A549 (cell line): ENCODE measurements at regions of chr5 and their contacts with region 1.

Region 1: GRCh38 chr5:126339215-126339805 is 83.9 kb upstream of the GRAMD2B start:
- DNase-seq: peak; percentile 38 to 65
- ATAC-seq: peak; percentile 57 to 82; a peak in 3 of 6 replicates
- H3K4me3 ChIP-seq: no peak overlapping the region
- H3K27ac ChIP-seq: no peak overlapping the region
- H3K4me1 ChIP-seq: no peaks in the 10 kb centered on the region
- CTCF ChIP-seq: peak; percentile 90
- EP300 ChIP-seq: no peak
- POLR2A ChIP-seq: no peak
- RAD21 ChIP-seq: peak; percentile 82 to 87

Region 2: GRCh38 chr5:125394661-125395280 is 944.5 kb before region 1 on chr5:
- CTCF ChIA-PET with region 1: no interaction called
- POLR2A ChIA-PET with region 1: no interaction called
- DNase-seq: no peak
- ATAC-seq: no peak
- H3K4me3 ChIP-seq: no peak overlapping the region
- H3K27ac ChIP-seq: no peak overlapping the region
- H3K4me1 ChIP-seq: no peaks in the 10 kb centered on the region
- CTCF ChIP-seq: no peak
- EP300 ChIP-seq: no peak
- POLR2A ChIP-seq: no peak
- RAD21 ChIP-seq: no peak

Region 3: GRCh38 chr5:125970631-125971307 is 368.5 kb before region 1 on chr5:
- CTCF ChIA-PET with region 1: no interaction called
- POLR2A ChIA-PET with region 1: no interaction called
- DNase-seq: no peak
- ATAC-seq: no peak
- H3K4me3 ChIP-seq: no peak overlapping the region
- H3K27ac ChIP-seq: no peak overlapping the region
- H3K4me1 ChIP-seq: no peaks in the 10 kb centered on the region
- CTCF ChIP-seq: no peak
- EP300 ChIP-seq: no peak
- POLR2A ChIP-seq: no peak
- RAD21 ChIP-seq: no peak

Region 4: GRCh38 chr5:126519634-126520592 is 180.6 kb after region 1 on chr5:
- CTCF ChIA-PET with region 1: interaction called, 12 read pairs
- POLR2A ChIA-PET with region 1: no interaction called
- DNase-seq: no peak
- ATAC-seq: no peak
- H3K4me3 ChIP-seq: no peak overlapping the region
- H3K27ac ChIP-seq: no peak overlapping the region
- H3K4me1 ChIP-seq: no peaks in the 10 kb centered on the region
- CTCF ChIP-seq: no peak
- EP300 ChIP-seq: no peak
- POLR2A ChIP-seq: no peak
- RAD21 ChIP-seq: no peak

Region 5: DNA sequence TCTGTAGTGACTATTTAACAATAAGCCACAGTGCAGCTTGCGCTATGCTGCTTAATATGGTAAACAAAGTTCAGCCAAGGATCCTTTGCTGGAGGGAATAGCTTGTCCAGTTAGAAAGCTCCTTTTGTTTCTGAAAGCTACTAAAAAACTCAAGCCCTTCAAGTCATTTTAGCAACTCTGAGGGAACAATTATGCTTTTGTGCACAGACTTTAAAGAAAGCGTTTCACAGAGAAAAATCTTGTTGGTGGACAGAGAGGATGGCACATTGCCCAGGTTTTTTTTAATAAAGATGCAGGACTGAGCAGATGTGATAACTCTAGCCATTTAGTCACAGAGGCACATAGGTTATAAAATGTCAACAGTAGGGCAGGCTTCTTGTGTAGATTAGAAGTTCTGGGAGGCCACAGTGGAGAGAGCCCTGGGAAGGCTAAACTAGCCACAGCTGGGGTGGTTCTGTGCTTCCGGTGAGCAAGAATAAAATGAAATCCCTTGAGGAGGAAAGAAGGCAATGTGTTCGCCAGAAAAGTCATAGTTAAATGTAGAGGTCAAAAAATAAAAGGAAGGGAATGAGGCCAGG is 192.3 kb after region 1 on chr5:
- CTCF ChIA-PET with region 1: interaction called, 23 read pairs
- POLR2A ChIA-PET with region 1: no interaction called
- DNase-seq: no peak
- ATAC-seq: no peak
- H3K4me3 ChIP-seq: no peak overlapping the region
- H3K27ac ChIP-seq: no peak overlapping the region
- H3K4me1 ChIP-seq: no peaks in the 10 kb centered on the region
- CTCF ChIP-seq: no peak
- EP300 ChIP-seq: no peak
- POLR2A ChIP-seq: no peak
- RAD21 ChIP-seq: no peak

Region 6: DNA sequence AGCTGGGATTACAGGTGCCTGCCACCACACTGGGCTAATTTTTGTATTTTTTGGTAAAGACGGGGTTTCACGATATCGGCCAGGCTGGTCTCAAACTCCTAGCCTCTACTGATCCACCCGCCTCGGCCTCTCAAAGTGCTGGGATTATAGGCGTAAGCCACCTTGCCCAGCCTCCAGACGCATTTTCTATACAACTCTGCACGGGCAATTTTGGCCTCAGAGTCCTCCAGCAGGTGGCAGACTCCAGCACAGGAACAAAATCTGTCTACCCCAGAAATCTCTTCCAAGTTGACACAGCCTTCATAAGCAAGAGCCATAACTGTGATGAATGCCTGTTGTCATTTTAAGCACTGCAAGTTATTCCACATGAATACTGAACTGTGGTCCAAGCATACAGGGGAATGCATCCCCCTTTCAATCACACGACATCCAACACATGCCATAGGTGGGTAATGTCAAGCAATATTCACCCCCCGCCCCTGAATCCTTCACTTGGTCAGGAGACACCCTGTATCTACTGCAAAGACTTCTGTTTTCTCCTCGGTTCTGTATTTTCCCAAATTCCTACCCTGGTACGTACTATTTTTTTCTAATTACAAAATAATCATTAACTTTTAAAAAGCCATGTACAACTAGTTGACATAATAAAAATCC is 204.9 kb after region 1 on chr5:
- CTCF ChIA-PET with region 1: interaction called, 39 read pairs
- POLR2A ChIA-PET with region 1: no interaction called
- DNase-seq: peak; percentile 46 to 58
- ATAC-seq: peak; percentile 83 to 88
- H3K4me3 ChIP-seq: no peak overlapping the region
- H3K27ac ChIP-seq: no peak overlapping the region
- H3K4me1 ChIP-seq: no peaks in the 10 kb centered on the region
- CTCF ChIP-seq: peak; percentile 54
- EP300 ChIP-seq: no peak
- POLR2A ChIP-seq: no peak
- RAD21 ChIP-seq: peak; percentile 35 to 49; a peak in 3 of 5 replicates

Region 7: GRCh38 chr5:126594676-126595485 is 255.6 kb after region 1 on chr5 and contains the start of gene ALDH7A1:
- CTCF ChIA-PET with region 1: interaction called, 34 read pairs
- POLR2A ChIA-PET with region 1: no interaction called
- DNase-seq: peak; percentile 96 to 97
- ATAC-seq: peak; percentile 98
- H3K4me3 ChIP-seq: peak within 1 kb of the TSS; percentile 54
- H3K27ac ChIP-seq: peak within 1 kb of the TSS; percentile 77 to 88
- H3K4me1 ChIP-seq: peaks cover 20% of the 10 kb centered on the region
- CTCF ChIP-seq: peak; percentile 68
- EP300 ChIP-seq: no peak
- POLR2A ChIP-seq: peak; percentile 99
- RAD21 ChIP-seq: peak; percentile 52 to 62
- polyA plus RNA-seq, gene ALDH7A1: 78.3 and 99.2 TPM in 2 replicates

Region 8: GRCh38 chr5:126769703-126770102 is 430.4 kb after region 1 on chr5:
- CTCF ChIA-PET with region 1: no interaction called
- POLR2A ChIA-PET with region 1: no interaction called
- DNase-seq: no peak
- ATAC-seq: no peak
- H3K4me3 ChIP-seq: no peak overlapping the region
- H3K27ac ChIP-seq: no peak overlapping the region
- H3K4me1 ChIP-seq: no peaks in the 10 kb centered on the region
- CTCF ChIP-seq: no peak
- EP300 ChIP-seq: no peak
- POLR2A ChIP-seq: no peak
- RAD21 ChIP-seq: no peak